ENCODE measurements at regions of chr15 and their contacts with region 1.

Region 1: DNA sequence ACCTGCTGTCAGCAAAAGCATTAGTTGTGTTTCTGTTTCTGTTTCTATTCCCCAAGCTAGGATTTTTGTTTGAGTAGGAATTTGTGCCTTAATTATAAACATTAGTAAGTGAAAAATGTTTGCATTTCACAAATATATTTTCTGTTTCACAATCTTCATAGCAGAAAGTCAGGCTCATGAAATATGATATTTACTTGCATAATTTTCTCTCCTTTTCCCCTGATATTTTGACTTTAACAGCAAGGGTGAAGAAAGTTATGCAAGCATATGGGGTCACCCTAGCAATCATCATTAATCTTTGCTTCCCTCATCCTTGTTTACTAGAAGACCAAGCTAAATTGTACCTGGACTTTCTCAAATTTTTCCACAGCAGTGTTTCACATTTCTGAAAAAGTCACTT is 140.3 kb upstream of the SEMA6D start:
- DNase-seq: no peak
- ATAC-seq: no peak
- H3K4me3 ChIP-seq: no peak overlapping the region
- H3K27ac ChIP-seq: no peak overlapping the region
- H3K4me1 ChIP-seq: no peaks in the 10 kb centered on the region
- H3K27me3 ChIP-seq: no peaks in the 10 kb centered on the region

Region 2: DNA sequence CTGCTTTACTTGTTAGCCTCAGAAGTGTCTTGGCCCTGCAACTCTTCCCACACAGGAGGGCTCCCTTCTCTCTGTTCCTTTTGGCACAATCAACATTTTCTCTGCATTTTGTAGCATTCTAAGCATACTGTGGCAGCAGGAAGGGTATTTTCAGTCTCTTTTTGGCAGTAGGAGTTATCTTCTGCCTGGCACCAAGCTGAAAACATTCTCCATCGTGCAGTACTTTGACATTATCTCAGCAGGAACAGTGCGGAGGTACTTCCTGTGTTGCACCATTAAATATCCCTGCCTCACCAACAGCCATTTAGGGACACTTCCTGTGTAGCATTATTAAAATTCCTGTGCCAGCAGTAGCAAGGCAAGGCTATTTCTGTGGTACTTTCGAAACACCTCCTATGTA is 92.9 kb before region 1 on chr15:
- intact Hi-C with region 1: loop called in 1 of 4 experiments (anchors 10 kb)
- DNase-seq: no peak
- ATAC-seq: no peak
- H3K4me3 ChIP-seq: no peak overlapping the region
- H3K27ac ChIP-seq: no peak overlapping the region
- H3K4me1 ChIP-seq: no peaks in the 10 kb centered on the region
- H3K27me3 ChIP-seq: no peaks in the 10 kb centered on the region

Region 3: DNA sequence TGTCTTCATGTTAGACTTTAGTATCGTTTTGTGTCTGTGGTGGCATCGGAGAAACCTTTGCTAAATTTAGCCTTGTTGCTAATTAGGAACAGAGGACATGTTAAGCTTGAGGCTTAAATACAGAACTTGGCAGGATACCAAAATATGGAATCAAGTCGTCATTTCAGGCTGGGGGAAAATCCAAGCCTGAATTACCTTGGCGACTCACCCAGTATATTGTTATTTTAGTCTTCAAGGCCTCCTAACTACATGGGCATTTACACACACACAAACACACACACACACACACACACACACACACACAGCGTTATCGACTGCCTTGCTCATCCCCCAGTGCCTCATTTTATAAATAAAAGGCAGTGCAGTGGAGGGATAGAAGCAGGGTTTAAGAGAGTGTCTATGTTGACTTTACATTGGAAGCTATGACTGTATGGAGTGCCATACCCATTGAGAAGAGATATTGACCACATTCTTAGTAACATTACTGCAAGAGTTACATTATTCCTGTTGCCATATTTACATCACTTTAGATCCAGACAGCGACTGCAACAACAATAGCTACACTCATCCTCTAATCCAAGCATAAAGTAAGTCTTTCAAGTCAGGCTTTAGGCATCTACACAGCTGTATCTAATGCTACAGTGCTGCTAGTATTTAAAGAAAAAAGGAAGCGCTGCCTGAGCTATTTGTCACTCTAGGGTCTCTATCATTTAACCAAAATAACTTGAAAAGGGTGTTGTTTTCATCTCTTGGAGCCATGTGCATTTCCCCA is 70.5 kb before region 1 on chr15:
- intact Hi-C with region 1: no loop called
- DNase-seq: peak in 1 of 3 donors; percentile 36
- ATAC-seq: peak; percentile 42 to 63
- H3K4me3 ChIP-seq: no peak overlapping the region
- H3K27ac ChIP-seq: no peak overlapping the region
- H3K4me1 ChIP-seq: peaks cover 8% of the 10 kb centered on the region
- H3K27me3 ChIP-seq: no peaks in the 10 kb centered on the region

Region 4: GRCh38 chr15:47750030-47750739 is 173.2 kb after region 1 on chr15:
- intact Hi-C with region 1: no loop called
- DNase-seq: no peak
- ATAC-seq: peak; percentile 35 to 71
- H3K4me3 ChIP-seq: no peak overlapping the region
- H3K27ac ChIP-seq: no peak overlapping the region
- H3K4me1 ChIP-seq: peaks cover 11% of the 10 kb centered on the region
- H3K27me3 ChIP-seq: no peaks in the 10 kb centered on the region